ENCODE measurements at regions of chr17 and their contacts with region 1.

Region 1: DNA sequence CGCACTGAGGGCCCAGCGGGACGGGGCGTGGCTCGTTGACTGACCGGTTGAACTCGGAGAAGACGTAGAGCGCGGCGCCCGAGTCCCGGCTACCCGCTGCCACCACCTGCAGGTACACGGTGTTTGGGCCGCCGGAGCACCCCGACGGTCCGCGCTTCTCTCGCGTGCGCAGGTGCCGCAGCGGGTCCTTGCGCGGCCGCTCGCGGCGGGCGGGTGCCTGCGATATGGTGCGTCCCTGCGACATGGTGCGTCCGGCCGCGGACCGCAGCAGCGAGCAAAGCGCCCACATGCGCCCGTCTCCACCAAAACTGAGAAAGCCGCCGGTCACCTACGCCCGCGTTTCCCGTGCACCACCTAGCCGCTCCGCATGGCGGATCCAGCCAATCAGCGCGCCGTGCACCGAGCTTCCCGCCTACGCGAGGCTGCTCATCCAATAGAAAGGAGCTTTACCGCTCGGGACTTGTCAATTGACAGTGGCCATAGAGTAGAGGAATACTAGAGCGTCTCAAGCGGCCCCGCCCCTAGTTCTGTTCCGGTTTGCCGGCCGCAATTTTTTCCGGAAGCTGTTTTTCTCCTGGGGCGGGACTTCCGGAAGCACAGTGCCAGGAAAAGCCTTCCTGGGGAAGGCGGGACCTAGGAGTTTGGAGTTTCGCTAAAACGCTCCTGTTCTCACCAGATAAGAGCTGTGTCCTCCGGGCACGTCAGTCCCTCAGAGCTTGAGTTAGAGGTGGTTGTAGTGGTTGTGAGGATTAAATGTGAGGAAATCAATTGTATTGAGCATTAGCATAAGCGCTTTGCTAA is at the start of gene ELAC2:
- DNase-seq: peak; percentile 90 to 98 (median 94)
- ATAC-seq: peak; percentile 98
- H3K4me3 ChIP-seq: peak within 1 kb of the TSS; percentile 62 to 71
- H3K4me3 Mint-ChIP-seq: peak within 1 kb of the TSS; percentile 99
- H3K27ac ChIP-seq: peak within 1 kb of the TSS; percentile 43 to 76
- H3K27ac Mint-ChIP-seq: peak within 1 kb of the TSS; percentile 97
- H3K4me1 ChIP-seq: peaks cover 13% of the 10 kb centered on the region
- H3K4me1 Mint-ChIP-seq: peaks cover 40% of the 10 kb centered on the region
- H3K27me3 ChIP-seq: no peaks in the 10 kb centered on the region
- H3K27me3 Mint-ChIP-seq: no peaks in the 10 kb centered on the region
- CTCF ChIP-seq: no peak
- total RNA-seq, gene ELAC2: 66.7 to 74.0 TPM

Region 2: DNA sequence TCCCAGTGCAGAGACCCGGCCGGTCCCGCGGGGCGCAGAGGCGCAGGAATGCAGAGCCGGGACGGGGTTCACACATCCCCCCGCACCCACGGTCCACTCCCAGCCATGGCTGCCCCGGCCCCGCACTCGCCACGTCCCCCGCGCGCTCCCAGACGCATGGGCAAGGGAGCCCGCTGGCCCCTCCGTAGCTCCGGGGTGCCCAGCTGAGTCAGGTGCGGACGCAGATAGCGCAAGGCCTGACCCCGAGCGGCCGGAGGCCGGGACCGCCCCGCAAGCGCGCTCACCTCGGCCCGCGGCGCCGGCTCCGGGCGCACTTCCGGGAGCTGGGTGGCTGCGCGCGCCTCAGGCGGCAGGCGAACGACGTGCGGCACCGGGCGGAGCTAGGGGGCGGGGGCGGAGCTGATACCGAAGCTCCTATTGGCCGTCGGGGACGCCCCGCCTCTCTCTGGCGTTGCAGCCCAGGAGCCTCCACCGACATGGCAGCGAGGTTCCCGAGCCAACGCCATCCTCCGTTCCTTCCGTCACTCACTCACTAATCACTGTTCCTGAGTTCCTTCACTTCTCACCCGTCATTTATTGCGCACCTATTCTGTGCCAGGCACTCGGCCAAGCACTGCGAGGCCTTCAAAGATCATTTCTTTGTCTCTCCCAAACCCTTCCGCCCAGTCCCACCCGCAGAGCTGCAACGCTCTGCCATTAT is 1020.6 kb before region 1 on chr17 and contains the start of gene ZNF18:
- CTCF ChIA-PET with region 1: no interaction called
- POLR2A ChIA-PET with region 1: interaction called, 8 read pairs
- intact Hi-C with region 1: loop called (anchors 1 to 5 kb)
- DNase-seq: peak; percentile 89 to 97 (median 96)
- ATAC-seq: peak; percentile 99
- H3K4me3 ChIP-seq: peak within 1 kb of the TSS; percentile 65 to 93
- H3K4me3 Mint-ChIP-seq: peak within 1 kb of the TSS; percentile 99
- H3K27ac ChIP-seq: peak within 1 kb of the TSS; percentile 89 to 90
- H3K27ac Mint-ChIP-seq: peak within 1 kb of the TSS; percentile 97
- H3K4me1 ChIP-seq: peaks cover 14% of the 10 kb centered on the region
- H3K4me1 Mint-ChIP-seq: peaks cover 33% of the 10 kb centered on the region
- H3K27me3 ChIP-seq: peaks cover 0 to 2% of the 10 kb centered on the region in 2 experiments
- H3K27me3 Mint-ChIP-seq: no peaks in the 10 kb centered on the region
- CTCF ChIP-seq: no peak
- total RNA-seq, gene ZNF18: 13.1 to 14.8 TPM

Region 3: GRCh38 chr17:12020642-12021622 is 996.9 kb before region 1 on chr17 and contains the start of gene MAP2K4:
- CTCF ChIA-PET with region 1: no interaction called
- POLR2A ChIA-PET with region 1: no interaction called
- intact Hi-C with region 1: loop called in 1 of 2 experiments (anchors 10 kb)
- DNase-seq: peak; percentile 89 to 98 (median 95)
- ATAC-seq: peak; percentile 98
- H3K4me3 ChIP-seq: peak within 1 kb of the TSS; percentile 44 to 53
- H3K4me3 Mint-ChIP-seq: peak within 1 kb of the TSS; percentile 84
- H3K27ac ChIP-seq: peak within 1 kb of the TSS; percentile 46 to 67
- H3K27ac Mint-ChIP-seq: peak within 1 kb of the TSS; percentile 74
- H3K4me1 ChIP-seq: peaks cover 41% of the 10 kb centered on the region
- H3K4me1 Mint-ChIP-seq: peaks cover 52% of the 10 kb centered on the region
- H3K27me3 ChIP-seq: no peaks in the 10 kb centered on the region
- H3K27me3 Mint-ChIP-seq: peaks cover 2% of the 10 kb centered on the region
- CTCF ChIP-seq: no peak
- total RNA-seq, gene MAP2K4: 29.4 to 31.7 TPM

Region 4: DNA sequence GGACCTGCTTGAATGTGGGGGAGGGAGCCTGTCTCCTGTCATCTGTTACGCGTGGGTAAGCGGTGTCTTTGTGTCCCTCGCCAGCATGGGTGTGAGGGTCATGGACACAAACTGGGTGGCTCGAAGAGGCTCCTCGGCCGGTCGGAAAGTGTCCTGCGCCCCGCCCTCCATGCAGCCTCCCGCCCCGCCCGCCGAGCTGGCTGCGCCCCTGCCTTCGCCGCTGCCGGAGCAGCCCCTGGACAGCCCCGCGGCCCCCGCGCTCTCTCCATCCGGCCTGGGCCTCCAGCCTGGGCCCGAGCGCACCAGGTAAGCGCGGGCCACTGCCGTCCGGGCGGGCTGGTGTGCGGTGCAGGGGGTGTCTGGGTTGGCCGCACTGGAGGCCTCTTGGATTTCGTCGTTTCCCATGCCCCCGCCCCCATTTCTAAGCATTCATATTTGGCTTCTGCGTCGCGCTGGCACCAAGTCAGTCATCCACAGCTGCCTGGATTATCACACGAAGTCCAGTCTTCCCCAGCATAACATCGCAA is 43.8 kb before region 1 on chr17:
- CTCF ChIA-PET with region 1: no interaction called
- POLR2A ChIA-PET with region 1: no interaction called
- intact Hi-C with region 1: no loop called
- DNase-seq: no peak
- ATAC-seq: no peak
- H3K4me3 ChIP-seq: no peak overlapping the region
- H3K4me3 Mint-ChIP-seq: no peak overlapping the region
- H3K27ac ChIP-seq: no peak overlapping the region
- H3K27ac Mint-ChIP-seq: no peak overlapping the region
- H3K4me1 ChIP-seq: no peaks in the 10 kb centered on the region
- H3K4me1 Mint-ChIP-seq: peaks cover 3% of the 10 kb centered on the region
- H3K27me3 ChIP-seq: no peaks in the 10 kb centered on the region
- H3K27me3 Mint-ChIP-seq: peaks cover 52% of the 10 kb centered on the region
- CTCF ChIP-seq: no peak

Region 5: GRCh38 chr17:13002766-13003451 is 14.9 kb before region 1 on chr17:
- CTCF ChIA-PET with region 1: interaction called, 22 read pairs
- POLR2A ChIA-PET with region 1: interaction called, 4 read pairs
- intact Hi-C with region 1: no loop called
- DNase-seq: peak in 7 of 9 experiments; percentile 24 to 63 (median 59)
- ATAC-seq: peak; percentile 40
- H3K4me3 ChIP-seq: no peak overlapping the region
- H3K4me3 Mint-ChIP-seq: no peak overlapping the region
- H3K27ac ChIP-seq: no peak overlapping the region
- H3K27ac Mint-ChIP-seq: no peak overlapping the region
- H3K4me1 ChIP-seq: no peaks in the 10 kb centered on the region
- H3K4me1 Mint-ChIP-seq: peaks cover 2% of the 10 kb centered on the region
- H3K27me3 ChIP-seq: no peaks in the 10 kb centered on the region
- H3K27me3 Mint-ChIP-seq: no peaks in the 10 kb centered on the region
- CTCF ChIP-seq: peak; percentile 75

Region 6: DNA sequence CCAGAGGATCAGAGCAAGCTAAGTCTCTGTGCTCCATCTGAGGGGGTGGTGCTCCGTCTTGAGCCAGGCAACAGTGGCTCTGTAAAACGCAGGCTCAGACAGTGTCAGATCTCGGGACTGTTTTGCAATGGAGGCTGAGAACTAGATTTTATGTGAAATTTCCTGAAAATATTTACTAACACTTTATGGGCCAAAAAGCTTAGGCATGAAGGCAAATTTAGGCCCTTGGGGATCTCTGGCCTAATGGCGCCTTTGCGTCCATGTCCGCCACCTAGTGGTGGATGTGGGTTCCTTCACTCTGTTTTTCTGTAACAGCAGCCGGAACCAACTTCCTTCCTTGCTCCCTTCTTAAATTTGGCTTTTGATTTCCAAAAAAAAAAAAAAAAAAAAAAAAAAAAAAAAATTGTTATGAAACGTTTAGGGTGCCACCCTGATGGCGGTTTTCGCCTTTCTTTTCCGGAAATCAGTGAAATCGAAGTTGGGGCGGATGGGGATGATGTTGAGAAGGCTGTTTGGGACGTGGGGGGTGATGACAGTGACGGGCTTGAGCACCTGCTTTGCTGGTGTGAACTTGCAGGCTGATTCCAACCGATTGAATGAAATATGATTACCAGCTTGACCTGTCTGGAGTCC is 14.0 kb after region 1 on chr17:
- CTCF ChIA-PET with region 1: interaction called, 203 read pairs
- POLR2A ChIA-PET with region 1: interaction called, 27 read pairs
- intact Hi-C with region 1: loop called in 1 of 2 experiments (anchors 1 kb)
- DNase-seq: peak; percentile 10 to 72 (median 41)
- ATAC-seq: peak; percentile 81
- H3K4me3 ChIP-seq: no peak overlapping the region
- H3K4me3 Mint-ChIP-seq: no peak overlapping the region
- H3K27ac ChIP-seq: no peak overlapping the region
- H3K27ac Mint-ChIP-seq: peak overlapping the region; percentile 75
- H3K4me1 ChIP-seq: peaks cover 3% of the 10 kb centered on the region
- H3K4me1 Mint-ChIP-seq: peaks cover 16% of the 10 kb centered on the region
- H3K27me3 ChIP-seq: no peaks in the 10 kb centered on the region
- H3K27me3 Mint-ChIP-seq: peaks cover 8% of the 10 kb centered on the region
- CTCF ChIP-seq: peak; percentile 72

Region 7: DNA sequence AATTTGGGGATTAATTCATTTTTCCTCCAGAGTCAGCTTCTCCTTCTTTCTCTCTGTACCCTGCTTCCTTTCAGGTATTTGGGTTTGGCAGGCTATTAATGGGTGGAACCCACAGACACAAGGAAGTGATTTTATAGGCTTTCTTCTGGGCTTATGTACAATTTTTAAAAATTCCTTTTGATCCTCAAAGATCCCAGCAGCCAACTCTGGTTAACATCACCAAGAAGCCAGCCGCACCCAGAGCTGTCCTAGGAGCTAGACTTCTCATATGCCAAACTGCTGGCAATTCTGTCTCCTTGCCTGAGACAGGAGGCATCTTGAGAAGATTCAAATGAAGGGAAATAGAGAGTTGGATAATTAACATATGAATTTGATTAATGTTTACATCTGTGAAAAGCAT is 47.2 kb after region 1 on chr17:
- CTCF ChIA-PET with region 1: no interaction called
- POLR2A ChIA-PET with region 1: no interaction called
- intact Hi-C with region 1: no loop called
- DNase-seq: no peak
- ATAC-seq: no peak
- H3K4me3 ChIP-seq: no peak overlapping the region
- H3K4me3 Mint-ChIP-seq: no peak overlapping the region
- H3K27ac ChIP-seq: no peak overlapping the region
- H3K27ac Mint-ChIP-seq: no peak overlapping the region
- H3K4me1 ChIP-seq: no peaks in the 10 kb centered on the region
- H3K4me1 Mint-ChIP-seq: no peaks in the 10 kb centered on the region
- H3K27me3 ChIP-seq: no peaks in the 10 kb centered on the region
- H3K27me3 Mint-ChIP-seq: peaks cover 14% of the 10 kb centered on the region
- CTCF ChIP-seq: no peak

Region 8: GRCh38 chr17:14069251-14070021 is 1051.6 kb after region 1 on chr17 and contains the start of gene COX10:
- CTCF ChIA-PET with region 1: no interaction called
- POLR2A ChIA-PET with region 1: no interaction called
- intact Hi-C with region 1: loop called (anchors 2 to 5 kb)
- DNase-seq: peak; percentile 56 to 90 (median 83)
- ATAC-seq: peak; percentile 97
- H3K4me3 ChIP-seq: peak within 1 kb of the TSS; percentile 95 to 100
- H3K4me3 Mint-ChIP-seq: peak within 1 kb of the TSS; percentile 95
- H3K27ac ChIP-seq: peak within 1 kb of the TSS; percentile 76 to 86
- H3K27ac Mint-ChIP-seq: peak within 1 kb of the TSS; percentile 96
- H3K4me1 ChIP-seq: peaks cover 26% of the 10 kb centered on the region
- H3K4me1 Mint-ChIP-seq: peaks cover 47% of the 10 kb centered on the region
- H3K27me3 ChIP-seq: no peaks in the 10 kb centered on the region
- H3K27me3 Mint-ChIP-seq: no peaks in the 10 kb centered on the region
- CTCF ChIP-seq: no peak
- total RNA-seq, gene COX10: 13.4 to 14.4 TPM

Region 9: GRCh38 chr17:14196377-14196997 is 1178.6 kb after region 1 on chr17:
- CTCF ChIA-PET with region 1: no interaction called
- POLR2A ChIA-PET with region 1: no interaction called
- intact Hi-C with region 1: loop called in 1 of 2 experiments (anchors 10 kb)
- DNase-seq: peak in 2 of 9 experiments; percentile 37 to 51
- ATAC-seq: no peak
- H3K4me3 ChIP-seq: peak overlapping the region in 1 of 2 experiments; percentile 29
- H3K4me3 Mint-ChIP-seq: peak overlapping the region; percentile 64
- H3K27ac ChIP-seq: peak overlapping the region in 1 of 2 experiments; percentile 59
- H3K27ac Mint-ChIP-seq: peak overlapping the region; percentile 96
- H3K4me1 ChIP-seq: peaks cover 95% of the 10 kb centered on the region
- H3K4me1 Mint-ChIP-seq: peaks cover 86% of the 10 kb centered on the region
- H3K27me3 ChIP-seq: no peaks in the 10 kb centered on the region
- H3K27me3 Mint-ChIP-seq: no peaks in the 10 kb centered on the region
- CTCF ChIP-seq: peak; percentile 38